CD14-positive monocyte (primary cell): ENCODE measurements at regions of chr4 and their contacts with region 1.

Region 1: GRCh38 chr4:5812506-5813229 is 80.2 kb downstream of the CRMP1 start:
- DNase-seq: peak; percentile 18 to 53 (median 47)
- H3K4me3 ChIP-seq: no peak overlapping the region
- H3K4me3 Mint-ChIP-seq: no peak overlapping the region
- H3K27ac ChIP-seq: no peak overlapping the region
- H3K27ac Mint-ChIP-seq: peak overlapping the region in 1 of 7 donors; percentile 10
- H3K4me1 ChIP-seq: no peaks in the 10 kb centered on the region
- H3K4me1 Mint-ChIP-seq: no peaks in the 10 kb centered on the region
- H3K27me3 ChIP-seq: no peaks in the 10 kb centered on the region
- H3K27me3 Mint-ChIP-seq: peaks cover 0 to 2% (median 0%) of the 10 kb centered on the region in 3 donors
- CTCF ChIP-seq: peak; percentile 73

Region 2: DNA sequence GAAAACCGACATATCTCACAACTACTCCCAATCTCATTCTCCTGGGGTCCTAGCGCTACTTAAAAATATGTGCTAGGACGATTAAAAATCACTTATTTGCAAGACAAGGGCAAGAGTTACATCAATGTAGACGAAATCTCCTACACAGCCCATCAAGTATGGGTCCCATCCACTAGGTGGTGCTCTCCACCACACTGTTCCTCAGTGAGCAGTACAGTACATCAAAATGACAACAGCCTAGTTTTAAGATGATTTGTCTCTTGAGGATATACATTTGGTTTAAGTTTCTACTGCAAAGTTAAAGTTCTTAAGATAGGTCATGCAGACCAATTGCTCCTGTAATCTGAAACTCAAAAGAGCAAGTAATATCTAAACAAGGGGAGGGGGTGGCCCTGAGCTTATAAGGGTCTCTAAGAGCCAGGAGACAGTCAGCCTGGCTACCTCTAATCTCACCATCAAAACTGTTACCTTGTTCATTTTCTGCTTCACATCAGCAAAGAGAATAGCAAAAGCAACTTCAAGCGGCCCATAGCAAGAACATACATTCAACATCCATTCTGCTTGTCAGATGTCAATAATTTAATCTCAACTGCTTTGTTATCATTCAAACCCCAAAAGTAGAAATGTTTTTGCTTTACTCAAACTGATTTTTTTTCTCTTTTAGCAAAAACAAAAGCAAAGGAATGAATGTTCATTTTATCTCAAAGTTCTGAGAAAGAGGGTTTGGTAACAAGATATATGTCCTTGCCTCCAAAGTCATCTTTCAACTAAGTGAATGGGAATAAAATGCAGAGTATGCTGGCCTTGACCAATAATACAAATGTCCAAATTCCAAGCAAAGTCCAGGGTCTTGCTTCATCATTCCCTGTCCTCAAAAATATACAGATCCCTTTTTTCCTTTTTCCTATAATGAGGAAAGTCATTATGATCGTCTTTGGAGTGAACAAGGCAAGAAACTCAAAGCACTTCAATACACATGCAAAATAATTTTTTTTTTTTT is 1324.0 kb before region 1 on chr4:
- intact Hi-C with region 1: loop called (anchors 10 kb)
- DNase-seq: peak; percentile 49 to 62 (median 56)
- H3K4me3 ChIP-seq: no peak overlapping the region
- H3K4me3 Mint-ChIP-seq: no peak overlapping the region
- H3K27ac ChIP-seq: no peak overlapping the region
- H3K27ac Mint-ChIP-seq: no peak overlapping the region
- H3K4me1 ChIP-seq: no peaks in the 10 kb centered on the region
- H3K4me1 Mint-ChIP-seq: peaks cover 7% of the 10 kb centered on the region
- H3K27me3 ChIP-seq: no peaks in the 10 kb centered on the region
- H3K27me3 Mint-ChIP-seq: peaks cover 0 to 2% (median 2%) of the 10 kb centered on the region in 3 donors
- CTCF ChIP-seq: peak; percentile 93

Region 3: DNA sequence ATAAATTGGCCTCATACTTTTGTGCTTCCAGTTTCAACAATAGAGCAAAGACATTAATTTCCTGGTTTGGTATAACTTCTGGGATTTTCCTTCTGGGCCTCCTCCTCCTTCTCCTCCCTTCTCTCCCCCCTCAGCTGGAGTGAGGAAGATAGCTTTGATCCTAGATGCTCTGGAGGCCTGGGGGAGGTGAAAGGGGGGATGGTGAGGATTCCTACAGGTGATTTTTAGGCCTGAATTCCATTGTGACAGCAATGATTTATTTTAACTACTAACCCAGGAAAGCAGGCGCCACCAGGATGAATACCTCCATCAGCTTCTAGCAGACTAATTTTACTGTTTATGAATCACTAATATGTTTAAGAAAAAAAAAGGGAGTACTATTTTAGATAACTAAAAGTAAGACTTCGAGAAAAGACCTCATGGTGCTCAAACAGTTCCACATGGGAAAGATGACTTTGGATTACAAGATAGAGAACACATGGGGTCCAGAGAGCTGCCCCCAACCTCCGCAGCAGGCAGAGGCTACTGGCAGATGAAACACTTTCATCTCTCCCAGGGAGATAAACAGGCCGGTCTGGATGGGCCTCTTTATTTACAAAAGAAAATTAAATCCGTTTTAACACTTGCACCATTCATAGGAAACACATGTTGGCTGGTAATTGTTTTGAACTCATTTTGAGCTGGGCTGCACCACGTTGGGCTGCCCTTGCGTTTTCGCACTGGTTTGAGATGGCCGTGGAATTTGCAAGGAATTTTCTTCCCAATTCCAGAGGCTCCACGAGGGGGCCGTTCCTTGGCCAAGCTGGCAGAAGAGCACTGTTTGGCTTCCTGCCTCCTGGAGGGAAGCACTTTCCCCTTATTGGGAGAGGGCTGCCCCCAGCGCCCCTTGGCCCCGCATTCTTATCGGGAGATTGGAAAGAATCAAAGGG is 1145.7 kb before region 1 on chr4:
- intact Hi-C with region 1: loop called in 1 of 2 experiments (anchors 5 kb)
- DNase-seq: no peak
- H3K4me3 ChIP-seq: no peak overlapping the region
- H3K4me3 Mint-ChIP-seq: no peak overlapping the region
- H3K27ac ChIP-seq: no peak overlapping the region
- H3K27ac Mint-ChIP-seq: peak overlapping the region in 1 of 7 donors; percentile 53
- H3K4me1 ChIP-seq: no peaks in the 10 kb centered on the region
- H3K4me1 Mint-ChIP-seq: peaks cover 10% of the 10 kb centered on the region
- H3K27me3 ChIP-seq: no peaks in the 10 kb centered on the region
- H3K27me3 Mint-ChIP-seq: no peaks in the 10 kb centered on the region
- CTCF ChIP-seq: no peak

Region 4: GRCh38 chr4:4912155-4912554 is 900.5 kb before region 1 on chr4:
- intact Hi-C with region 1: no loop called
- DNase-seq: no peak
- H3K4me3 ChIP-seq: no peak overlapping the region
- H3K4me3 Mint-ChIP-seq: no peak overlapping the region
- H3K27ac ChIP-seq: no peak overlapping the region
- H3K27ac Mint-ChIP-seq: no peak overlapping the region
- H3K4me1 ChIP-seq: no peaks in the 10 kb centered on the region
- H3K4me1 Mint-ChIP-seq: no peaks in the 10 kb centered on the region
- H3K27me3 ChIP-seq: no peaks in the 10 kb centered on the region
- H3K27me3 Mint-ChIP-seq: peaks cover 10 to 11% (median 11%) of the 10 kb centered on the region in 3 donors
- CTCF ChIP-seq: no peak